Body of pancreas (tissue), 4 donors: ENCODE measurements at regions of chr13 and their contacts with region 1.

Region 1: GRCh38 chr13:44484562-44485138 is 91.5 kb downstream of the TSC22D1 start:
- DNase-seq: no peak
- ATAC-seq: no peak
- H3K4me3 ChIP-seq: no peak overlapping the region
- H3K27ac ChIP-seq: no peak overlapping the region
- H3K4me1 ChIP-seq: peaks cover 3% of the 10 kb centered on the region
- H3K27me3 ChIP-seq: no peaks in the 10 kb centered on the region
- CTCF ChIP-seq: no peak
- POLR2A ChIP-seq: no peak

Region 2: GRCh38 chr13:44969551-44970484 is 485.2 kb after region 1 on chr13:
- intact Hi-C with region 1: loop called (anchors 5 kb)
- DNase-seq: peak in 1 of 4 donors; percentile 39
- ATAC-seq: peak; percentile 74
- H3K4me3 ChIP-seq: no peak overlapping the region
- H3K27ac ChIP-seq: peak overlapping the region in 1 of 4 donors; percentile 29
- H3K4me1 ChIP-seq: peaks cover 16% of the 10 kb centered on the region
- H3K27me3 ChIP-seq: no peaks in the 10 kb centered on the region
- CTCF ChIP-seq: peak; percentile 66 to 91 (median 85)
- POLR2A ChIP-seq: no peak